Adrenal gland (tissue), 19 donors: ENCODE measurements at regions of chr9 and their contacts with region 1.

Region 1: DNA sequence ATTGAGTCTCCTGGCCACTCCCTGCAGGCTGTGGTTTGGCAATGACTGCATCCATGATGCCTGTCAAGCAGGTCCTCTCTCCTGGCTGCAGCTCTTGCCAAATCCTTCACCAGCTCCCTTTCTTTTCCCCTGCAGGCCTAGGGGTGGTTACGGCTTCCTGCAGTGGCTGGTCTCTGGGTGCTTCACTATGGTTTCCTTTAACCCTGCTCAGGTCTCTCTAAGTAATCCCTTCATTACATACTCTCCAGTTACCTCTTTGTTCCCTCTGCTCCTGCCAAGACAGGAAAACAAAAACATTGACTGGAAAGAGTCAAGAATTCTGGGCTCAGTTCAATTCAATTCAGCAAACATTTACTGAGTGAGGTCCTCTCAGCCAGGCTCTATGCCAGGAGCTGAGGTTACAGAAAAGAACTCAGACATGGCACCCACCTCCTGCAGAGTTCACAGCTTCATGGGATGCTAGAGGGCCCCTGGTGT is 19.8 kb upstream of the PTPN3 start:
- DNase-seq: no peak
- H3K4me3 ChIP-seq: no peak overlapping the region
- H3K27ac ChIP-seq: no peak overlapping the region
- H3K4me1 ChIP-seq: no peaks in the 10 kb centered on the region
- H3K27me3 ChIP-seq: no peaks in the 10 kb centered on the region
- CTCF ChIP-seq: no peak
- POLR2A ChIP-seq: no peak

Region 2: GRCh38 chr9:109448223-109448622 is 69.7 kb before region 1 on chr9:
- intact Hi-C with region 1: loop called in 1 of 2 experiments (anchors 5 kb)
- DNase-seq: no peak
- H3K4me3 ChIP-seq: no peak overlapping the region
- H3K27ac ChIP-seq: no peak overlapping the region
- H3K4me1 ChIP-seq: no peaks in the 10 kb centered on the region
- H3K27me3 ChIP-seq: no peaks in the 10 kb centered on the region
- CTCF ChIP-seq: no peak
- POLR2A ChIP-seq: no peak